MCF 10A (cell line): ENCODE measurements at regions of chr15 and their contacts with region 1.

Region 1: GRCh38 chr15:57667171-57667849 is 39.2 kb upstream of the POLR2M start:
- DNase-seq: peak; percentile 73
- H3K4me3 Mint-ChIP-seq: peak overlapping the region; percentile 43
- H3K27ac Mint-ChIP-seq: no peak overlapping the region
- H3K4me1 Mint-ChIP-seq: peaks cover 19% of the 10 kb centered on the region
- H3K27me3 Mint-ChIP-seq: no peaks in the 10 kb centered on the region
- CTCF ChIP-seq: peak; percentile 50

Region 2: DNA sequence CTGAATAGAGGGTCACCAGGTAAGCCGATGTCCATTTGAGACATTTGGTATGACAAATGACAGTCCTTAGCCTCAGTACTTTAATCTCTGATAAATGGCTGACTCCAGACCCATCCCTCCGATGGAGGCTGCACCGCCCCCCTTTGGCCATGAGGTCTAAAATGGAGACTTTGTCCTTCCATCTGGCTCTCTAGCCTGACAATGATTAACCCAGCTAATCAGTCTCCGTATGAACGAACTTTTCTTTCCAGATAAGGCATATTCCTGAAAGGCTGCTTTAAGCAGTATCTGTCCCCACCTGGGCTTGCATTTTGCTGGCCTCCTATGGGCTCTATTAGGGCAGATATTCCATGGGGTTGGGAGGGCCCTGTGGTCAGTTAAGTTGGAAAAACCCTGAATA is 86.4 kb before region 1 on chr15:
- CTCF ChIA-PET with region 1: no interaction called
- POLR2A ChIA-PET with region 1: no interaction called
- intact Hi-C with region 1: no loop called
- DNase-seq: no peak
- H3K4me3 Mint-ChIP-seq: no peak overlapping the region
- H3K27ac Mint-ChIP-seq: no peak overlapping the region
- H3K4me1 Mint-ChIP-seq: no peaks in the 10 kb centered on the region
- H3K27me3 Mint-ChIP-seq: no peaks in the 10 kb centered on the region
- CTCF ChIP-seq: no peak

Region 3: GRCh38 chr15:57680021-57680420 is 12.7 kb after region 1 on chr15:
- CTCF ChIA-PET with region 1: interaction called, 24 read pairs
- POLR2A ChIA-PET with region 1: interaction called, 4 read pairs
- intact Hi-C with region 1: no loop called
- DNase-seq: peak; percentile 67
- H3K4me3 Mint-ChIP-seq: peak overlapping the region; percentile 24
- H3K27ac Mint-ChIP-seq: peak overlapping the region; percentile 20
- H3K4me1 Mint-ChIP-seq: peaks cover 18% of the 10 kb centered on the region
- H3K27me3 Mint-ChIP-seq: no peaks in the 10 kb centered on the region
- CTCF ChIP-seq: no peak

Region 4: GRCh38 chr15:57943766-57944420 is 276.6 kb after region 1 on chr15:
- CTCF ChIA-PET with region 1: no interaction called
- POLR2A ChIA-PET with region 1: no interaction called
- intact Hi-C with region 1: no loop called
- DNase-seq: no peak
- H3K4me3 Mint-ChIP-seq: no peak overlapping the region
- H3K27ac Mint-ChIP-seq: no peak overlapping the region
- H3K4me1 Mint-ChIP-seq: no peaks in the 10 kb centered on the region
- H3K27me3 Mint-ChIP-seq: no peaks in the 10 kb centered on the region
- CTCF ChIP-seq: no peak